ENCODE measurements at regions of chr17 and their contacts with region 1.

Region 1: GRCh38 chr17:39153599-39154051 is 2.2 kb upstream of the PLXDC1 start:
- DNase-seq: peak in 1 of 2 experiments; percentile 98
- H3K4me3 ChIP-seq: peak overlapping the region; percentile 72 to 100 (median 87)
- H3K27ac ChIP-seq: peak overlapping the region; percentile 62; the same call in 1 of the 2 replicates
- H3K4me1 ChIP-seq: peaks cover 0 to 15% (median 6%) of the 10 kb centered on the region in 4 experiments; a peak in 4 of 7 replicates
- H3K27me3 ChIP-seq: peaks cover 3 to 18% (median 15%) of the 10 kb centered on the region in 4 experiments
- CTCF ChIP-seq: peak in 1 of 3 experiments; percentile 12; a peak in 2 of 4 replicates
- EP300 ChIP-seq: no peak
- POLR2A ChIP-seq: no peak
- RAD21 ChIP-seq: no peak; a peak in 1 of 4 replicates

Region 2: DNA sequence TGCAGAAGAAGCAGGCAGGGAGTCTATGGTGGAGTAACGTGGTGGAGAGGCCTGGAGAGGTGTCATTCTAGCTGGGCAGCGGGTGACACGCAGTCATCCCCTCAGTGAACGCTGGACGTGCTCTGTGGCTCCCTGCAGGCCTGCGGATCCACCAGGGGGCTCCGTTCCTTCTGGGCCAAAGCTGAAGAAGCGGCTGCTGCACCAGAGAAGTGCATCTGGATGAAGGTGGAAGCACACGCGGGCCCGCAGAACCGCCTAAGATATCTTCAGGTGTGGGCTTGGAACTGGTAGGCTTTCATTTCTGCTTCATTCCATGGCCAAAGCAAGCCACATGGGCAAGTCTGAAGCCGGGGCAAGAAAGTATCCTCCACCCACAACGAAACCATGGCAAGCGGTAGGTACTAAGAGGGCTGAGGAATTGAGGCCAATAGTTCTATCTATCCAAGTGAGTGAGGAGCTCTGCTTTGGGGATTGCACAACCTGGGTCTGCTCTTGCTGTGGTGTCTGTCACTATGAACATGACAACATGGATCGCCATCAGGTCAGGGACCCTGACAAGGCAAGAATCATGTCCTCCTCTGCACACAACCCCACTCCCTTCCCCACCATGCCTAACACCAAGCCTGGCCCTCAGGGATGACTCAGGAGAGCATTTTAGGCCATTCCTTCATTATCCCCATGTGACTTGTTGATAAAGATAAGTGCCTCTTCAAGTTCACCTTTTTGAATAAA is 107.5 kb before region 1 on chr17:
- CTCF ChIA-PET with region 1: interaction called, 15 read pairs
- POLR2A ChIA-PET with region 1: interaction called, 16 read pairs
- DNase-seq: peak in 1 of 2 experiments; percentile 78
- H3K4me3 ChIP-seq: no peak overlapping the region
- H3K27ac ChIP-seq: peak overlapping the region; percentile 97
- H3K4me1 ChIP-seq: peaks cover 0 to 5% (median 0%) of the 10 kb centered on the region in 4 experiments; a peak in 4 of 7 replicates
- H3K27me3 ChIP-seq: no peaks in the 10 kb centered on the region
- CTCF ChIP-seq: peak; percentile 72 to 90 (median 77)
- EP300 ChIP-seq: no peak
- POLR2A ChIP-seq: peak in 1 of 2 experiments; percentile 63; a peak in 1 of 3 replicates
- RAD21 ChIP-seq: peak; percentile 42 to 65; a peak in 3 of 4 replicates

Region 3: DNA sequence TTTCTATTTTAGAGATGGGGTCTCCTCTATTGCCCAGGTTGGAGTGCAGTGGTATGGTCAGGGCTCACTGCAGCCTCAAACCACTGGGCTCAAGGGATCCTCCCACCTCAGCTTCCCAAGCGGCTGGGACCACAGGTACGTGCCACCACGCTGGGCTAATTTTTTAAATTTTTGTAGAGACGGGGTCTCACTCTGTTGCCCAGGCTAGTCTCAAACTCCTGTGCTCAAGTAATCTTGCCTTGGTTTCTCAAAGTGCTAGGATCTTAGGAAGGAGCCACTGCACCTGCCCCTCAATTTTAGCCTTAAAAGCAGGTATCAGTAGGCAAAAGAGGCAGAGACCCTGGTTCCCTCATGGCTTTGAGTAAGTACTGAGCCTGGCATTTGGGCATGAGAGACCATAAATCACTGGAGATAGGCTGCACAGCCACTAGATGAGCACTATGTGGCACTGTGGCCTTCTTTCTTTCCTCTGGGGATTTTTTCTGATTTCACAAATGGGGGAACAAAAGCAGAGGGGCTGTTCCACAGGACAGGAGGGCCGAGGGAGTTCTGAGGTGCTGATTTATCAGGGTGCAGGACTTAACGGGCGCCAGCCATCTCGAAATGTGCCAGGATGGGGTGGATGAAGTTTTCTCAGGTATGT is 84.4 kb before region 1 on chr17:
- CTCF ChIA-PET with region 1: interaction called, 18 read pairs
- POLR2A ChIA-PET with region 1: interaction called, 4 read pairs
- DNase-seq: no peak
- H3K4me3 ChIP-seq: no peak overlapping the region
- H3K27ac ChIP-seq: no peak overlapping the region
- H3K4me1 ChIP-seq: peaks cover 0 to 10% (median 4%) of the 10 kb centered on the region in 4 experiments; a peak in 5 of 7 replicates
- H3K27me3 ChIP-seq: no peaks in the 10 kb centered on the region
- CTCF ChIP-seq: peak; percentile 26 to 85 (median 69)
- EP300 ChIP-seq: no peak
- POLR2A ChIP-seq: no peak
- RAD21 ChIP-seq: peak; percentile 72 to 82

Region 4: GRCh38 chr17:39094607-39095308 is 58.9 kb before region 1 on chr17:
- CTCF ChIA-PET with region 1: interaction called, 10 read pairs
- POLR2A ChIA-PET with region 1: interaction called, 3 read pairs
- DNase-seq: no peak
- H3K4me3 ChIP-seq: no peak overlapping the region
- H3K27ac ChIP-seq: no peak overlapping the region
- H3K4me1 ChIP-seq: peaks cover 0 to 3% (median 2%) of the 10 kb centered on the region in 4 experiments; a peak in 2 of 7 replicates
- H3K27me3 ChIP-seq: no peaks in the 10 kb centered on the region
- CTCF ChIP-seq: no peak
- EP300 ChIP-seq: no peak
- POLR2A ChIP-seq: no peak
- RAD21 ChIP-seq: no peak

Region 5: DNA sequence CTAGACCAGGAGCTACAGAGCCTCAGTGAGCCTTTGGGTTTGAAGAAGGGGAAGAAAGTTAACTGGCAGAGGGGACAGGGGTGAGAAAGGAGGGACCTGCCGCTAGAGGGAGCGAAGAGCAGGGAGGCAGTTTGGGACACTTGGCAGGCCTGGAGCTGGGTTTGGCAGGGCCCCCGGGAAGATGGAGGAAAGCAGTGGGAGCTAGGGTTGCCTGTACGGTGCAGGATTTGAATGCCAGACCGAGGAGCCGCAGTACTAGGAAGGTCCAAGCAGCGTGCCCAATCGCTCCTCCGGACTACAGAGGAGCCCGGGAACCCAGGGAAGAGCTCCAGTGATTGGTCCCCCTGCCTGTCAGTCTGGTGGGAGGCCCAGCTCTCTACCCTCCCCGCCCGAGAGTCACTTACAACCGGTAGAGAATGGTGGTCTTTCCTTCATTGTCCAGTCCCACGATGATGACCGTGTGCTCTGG is 11.1 kb after region 1 on chr17:
- CTCF ChIA-PET with region 1: interaction called, 67 read pairs
- POLR2A ChIA-PET with region 1: interaction called, 11 read pairs
- DNase-seq: peak; percentile 90 to 91
- H3K4me3 ChIP-seq: peak overlapping the region; percentile 58 to 84 (median 77)
- H3K27ac ChIP-seq: no peak overlapping the region
- H3K4me1 ChIP-seq: peaks cover 0 to 8% (median 6%) of the 10 kb centered on the region in 4 experiments; a peak in 5 of 7 replicates
- H3K27me3 ChIP-seq: peaks cover 14 to 31% (median 25%) of the 10 kb centered on the region in 4 experiments
- CTCF ChIP-seq: peak; percentile 85 to 98 (median 95)
- EP300 ChIP-seq: no peak; a peak in 1 of 3 replicates
- POLR2A ChIP-seq: peak in 1 of 2 experiments; percentile 42; a peak in 1 of 3 replicates
- RAD21 ChIP-seq: peak; percentile 58 to 67

Region 6: DNA sequence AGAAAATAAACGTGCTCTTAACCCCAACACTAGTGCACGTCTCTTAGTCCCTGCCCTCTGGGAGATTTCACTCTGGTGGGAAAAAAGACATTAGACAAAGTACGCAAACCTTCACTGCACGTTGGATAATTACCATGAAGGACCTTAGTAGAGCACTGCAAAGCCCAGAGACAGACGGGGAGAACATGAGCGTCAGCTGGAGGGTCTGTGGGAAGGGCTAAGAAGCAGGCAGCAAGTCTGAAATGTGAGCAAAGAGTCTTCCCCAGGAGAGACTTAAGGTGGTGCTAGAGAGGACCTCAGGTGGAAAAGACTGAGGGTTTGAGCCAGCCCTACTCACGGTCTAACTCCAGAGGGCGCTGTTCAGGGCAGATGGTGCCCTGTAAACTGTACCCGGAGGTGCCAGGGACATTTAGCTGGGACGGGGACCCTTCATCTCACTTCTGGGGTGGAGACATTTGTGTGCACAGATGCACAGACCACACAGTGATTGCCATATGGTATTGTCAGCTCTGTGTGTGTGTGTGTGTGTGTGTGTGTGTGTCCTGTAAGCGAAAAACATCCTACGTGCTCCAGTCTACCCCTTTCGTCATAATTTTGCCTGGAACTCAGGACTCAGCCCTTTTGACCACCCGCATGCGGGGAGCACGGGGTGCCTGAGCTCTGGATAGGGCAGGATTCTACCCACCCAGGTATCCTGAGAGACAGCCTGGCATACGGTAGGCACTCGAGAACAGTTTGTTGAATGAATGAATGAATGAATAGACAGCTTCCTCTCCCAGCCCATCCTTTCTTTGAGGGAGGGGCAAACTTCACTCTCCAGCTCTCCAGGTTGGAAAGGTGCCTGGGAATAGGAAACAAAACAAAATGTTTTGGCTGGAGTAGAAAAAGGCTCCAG is 82.2 kb after region 1 on chr17:
- CTCF ChIA-PET with region 1: interaction called, 10 read pairs
- POLR2A ChIA-PET with region 1: no interaction called
- DNase-seq: peak; percentile 49 to 84
- H3K4me3 ChIP-seq: no peak overlapping the region
- H3K27ac ChIP-seq: no peak overlapping the region
- H3K4me1 ChIP-seq: peaks cover 0 to 14% (median 10%) of the 10 kb centered on the region in 4 experiments; a peak in 6 of 7 replicates
- H3K27me3 ChIP-seq: no peaks in the 10 kb centered on the region
- CTCF ChIP-seq: peak; percentile 94 to 100 (median 99)
- EP300 ChIP-seq: no peak
- POLR2A ChIP-seq: no peak
- RAD21 ChIP-seq: peak; percentile 45; a peak in 3 of 4 replicates

Region 7: GRCh38 chr17:39416141-39416540 is 262.5 kb after region 1 on chr17:
- CTCF ChIA-PET with region 1: no interaction called
- POLR2A ChIA-PET with region 1: no interaction called
- DNase-seq: no peak
- H3K4me3 ChIP-seq: no peak overlapping the region
- H3K27ac ChIP-seq: no peak overlapping the region
- H3K4me1 ChIP-seq: no peaks in the 10 kb centered on the region
- H3K27me3 ChIP-seq: no peaks in the 10 kb centered on the region
- CTCF ChIP-seq: no peak
- EP300 ChIP-seq: no peak
- POLR2A ChIP-seq: no peak
- RAD21 ChIP-seq: no peak